ENCODE measurements at regions of chr13 and their contacts with region 1.

Region 1: DNA sequence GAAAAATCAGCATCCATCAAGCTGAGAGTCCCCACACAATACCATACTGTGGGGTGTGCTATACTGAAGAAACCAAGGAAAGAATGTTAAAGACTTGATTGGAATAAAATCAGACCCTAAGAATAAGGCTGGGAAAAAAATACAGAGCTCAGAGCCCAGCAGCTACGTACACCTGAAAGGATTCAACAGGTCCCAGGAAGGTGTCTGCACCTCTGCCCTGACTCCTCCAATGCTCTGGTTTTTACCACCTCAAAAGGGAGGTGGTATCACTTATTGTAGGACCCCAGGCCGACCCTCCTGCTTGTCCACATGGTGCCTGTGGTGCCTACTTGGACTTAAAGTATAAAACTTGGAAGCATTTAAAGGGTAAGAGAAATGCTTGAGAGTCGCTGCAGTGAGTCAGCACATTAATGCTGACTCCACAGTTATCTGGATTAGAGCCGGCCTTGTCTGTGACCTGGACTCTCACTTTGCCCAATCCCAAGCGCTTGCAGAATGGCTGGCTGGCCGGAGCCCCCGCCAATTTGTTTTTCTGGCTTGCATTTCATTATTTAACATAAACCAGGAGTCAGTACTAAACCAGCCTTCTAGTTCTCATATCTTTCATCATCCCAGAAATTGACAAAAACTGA is 110.1 kb downstream of the FGF14 start:
- DNase-seq: no peak
- ATAC-seq: peak in 2 of 8 donors; percentile 52 to 83
- H3K4me3 ChIP-seq: no peak overlapping the region
- H3K27ac ChIP-seq: no peak overlapping the region
- H3K4me1 ChIP-seq: peaks cover 0 to 25% (median 10%) of the 10 kb centered on the region in 9 donors
- H3K27me3 ChIP-seq: no peaks in the 10 kb centered on the region
- CTCF ChIP-seq: no peak

Region 2: GRCh38 chr13:102117175-102117828 is 174.4 kb before region 1 on chr13:
- intact Hi-C with region 1: no loop called
- DNase-seq: no peak
- ATAC-seq: no peak
- H3K4me3 ChIP-seq: no peak overlapping the region
- H3K27ac ChIP-seq: no peak overlapping the region
- H3K4me1 ChIP-seq: no peaks in the 10 kb centered on the region
- H3K27me3 ChIP-seq: no peaks in the 10 kb centered on the region
- CTCF ChIP-seq: no peak

Region 3: DNA sequence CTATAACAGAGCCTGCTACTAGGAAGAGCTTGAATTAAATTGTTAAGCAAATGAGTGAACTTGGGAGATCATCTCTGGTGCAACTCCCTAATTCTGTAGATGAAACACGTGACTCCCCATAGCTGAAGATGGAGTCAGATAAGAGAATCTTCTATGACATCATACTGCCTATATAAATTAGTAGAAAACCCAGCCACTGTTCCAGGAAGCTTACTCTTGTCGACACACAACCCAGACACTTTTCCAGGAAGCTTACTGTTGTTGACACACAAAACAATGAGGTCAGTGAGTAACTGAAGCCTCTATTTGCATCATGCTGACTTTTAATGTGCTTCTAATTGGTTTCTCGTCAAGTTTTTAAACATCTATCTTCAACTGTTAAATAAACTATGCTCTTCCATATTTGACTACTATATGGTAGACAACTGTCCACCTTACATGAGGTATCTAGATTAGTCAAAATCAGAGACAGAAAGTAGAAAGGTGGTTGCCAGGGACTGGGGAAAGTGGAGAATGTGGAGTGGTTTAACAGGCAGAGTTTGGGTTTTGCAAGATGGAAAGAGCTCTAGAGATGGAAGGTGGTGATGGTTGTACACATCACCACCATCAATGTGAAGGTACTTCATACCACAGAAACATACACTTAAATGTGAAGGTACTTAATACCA is 58.0 kb before region 1 on chr13:
- intact Hi-C with region 1: loop called in 1 of 10 experiments (anchors 10 kb)
- DNase-seq: no peak
- ATAC-seq: no peak
- H3K4me3 ChIP-seq: no peak overlapping the region
- H3K27ac ChIP-seq: no peak overlapping the region
- H3K4me1 ChIP-seq: no peaks in the 10 kb centered on the region
- H3K27me3 ChIP-seq: no peaks in the 10 kb centered on the region
- CTCF ChIP-seq: no peak

Measured in heart right ventricle (tissue), 16 donors.